PC-9 (cell line): ENCODE measurements at regions of chr7 and their contacts with region 1.

Region 1: DNA sequence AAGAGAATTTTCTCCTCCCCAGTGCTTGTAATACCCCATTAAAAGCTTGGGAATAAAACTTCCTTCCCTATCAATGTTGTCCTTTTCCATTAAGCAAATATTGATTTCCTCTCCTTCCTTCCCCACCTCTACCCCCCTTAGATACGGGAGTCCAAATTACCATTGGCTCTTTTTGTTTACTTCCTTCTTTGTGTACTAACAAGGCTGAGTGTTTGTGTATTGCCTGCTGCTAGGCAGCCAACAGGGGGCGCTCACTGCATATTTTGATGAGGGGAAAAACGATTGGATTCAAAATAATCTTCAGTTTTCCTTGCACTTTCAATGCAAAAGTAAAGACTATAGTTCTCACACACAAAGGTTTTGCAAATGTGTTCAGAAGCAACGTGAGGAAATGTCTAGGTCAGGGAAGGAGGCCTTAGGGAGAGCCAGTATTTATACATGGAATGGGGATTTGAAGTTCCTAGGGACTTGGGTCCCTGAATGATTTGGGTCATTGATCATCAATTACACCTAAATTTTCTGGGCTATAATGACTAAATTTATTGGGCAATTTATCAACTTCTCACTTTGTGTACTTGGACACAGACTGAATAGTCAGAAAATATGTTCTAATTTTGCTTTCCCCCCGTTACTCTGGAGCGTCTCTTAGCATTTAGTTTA is 23.6 kb upstream of the VPS41 start:
- DNase-seq: peak; percentile 52 to 58
- H3K4me3 ChIP-seq: no peak overlapping the region
- H3K27ac ChIP-seq: no peak overlapping the region
- H3K4me1 ChIP-seq: peaks cover 14% of the 10 kb centered on the region
- H3K27me3 ChIP-seq: peaks cover 5% of the 10 kb centered on the region; the same call in 1 of the 2 replicates
- CTCF ChIP-seq: peak; percentile 98

Region 2: DNA sequence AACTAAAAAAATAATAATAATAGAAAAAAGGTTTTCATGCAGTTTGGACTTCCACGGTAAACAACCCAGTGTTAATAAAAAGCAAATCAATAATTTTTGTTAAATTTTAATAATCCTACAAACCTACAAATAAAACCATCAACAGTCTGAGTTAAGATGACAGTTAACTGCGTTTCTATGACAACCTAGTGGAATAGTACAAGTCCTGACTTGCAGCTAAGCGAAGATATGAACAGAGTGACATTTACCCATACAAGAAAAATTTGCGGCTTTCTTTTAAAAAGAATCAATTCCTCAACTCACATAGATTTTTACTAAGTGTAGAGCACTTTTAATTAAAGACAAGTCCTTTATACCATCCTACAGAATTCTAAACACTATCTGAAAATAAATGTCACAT is 59.2 kb before region 1 on chr7:
- CTCF ChIA-PET with region 1: no interaction called
- POLR2A ChIA-PET with region 1: interaction called, 10 read pairs
- intact Hi-C with region 1: no loop called
- DNase-seq: no peak
- H3K4me3 ChIP-seq: no peak overlapping the region
- H3K27ac ChIP-seq: no peak overlapping the region
- H3K4me1 ChIP-seq: no peaks in the 10 kb centered on the region
- H3K27me3 ChIP-seq: no peaks in the 10 kb centered on the region
- CTCF ChIP-seq: no peak

Region 3: DNA sequence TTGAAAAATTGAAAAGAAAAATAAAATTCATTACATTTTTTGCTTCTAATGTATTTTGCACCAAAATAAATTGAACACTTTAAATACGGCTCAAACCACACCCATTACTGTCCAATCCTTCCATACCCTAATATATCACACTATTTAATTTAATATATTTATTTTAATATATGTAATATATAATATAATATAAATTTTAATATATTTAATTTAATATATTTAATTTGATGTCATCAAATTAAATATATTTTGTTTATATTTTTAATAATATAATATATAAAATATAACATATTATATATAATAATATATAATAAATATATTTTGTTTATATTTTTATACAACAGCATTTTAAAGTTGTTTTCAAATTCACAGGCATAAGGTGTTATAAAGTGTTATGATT is 29.4 kb after region 1 on chr7:
- CTCF ChIA-PET with region 1: no interaction called
- POLR2A ChIA-PET with region 1: no interaction called
- intact Hi-C with region 1: no loop called
- DNase-seq: no peak
- H3K4me3 ChIP-seq: no peak overlapping the region
- H3K27ac ChIP-seq: no peak overlapping the region
- H3K4me1 ChIP-seq: no peaks in the 10 kb centered on the region
- H3K27me3 ChIP-seq: peaks cover 35% of the 10 kb centered on the region
- CTCF ChIP-seq: no peak

Region 4: GRCh38 chr7:39465055-39465929 is 532.7 kb after region 1 on chr7:
- CTCF ChIA-PET with region 1: no interaction called
- POLR2A ChIA-PET with region 1: no interaction called
- intact Hi-C with region 1: loop called (anchors 5 kb)
- DNase-seq: peak; percentile 52 to 64
- H3K4me3 ChIP-seq: no peak overlapping the region
- H3K27ac ChIP-seq: no peak overlapping the region
- H3K4me1 ChIP-seq: no peaks in the 10 kb centered on the region
- H3K27me3 ChIP-seq: peaks cover 27% of the 10 kb centered on the region
- CTCF ChIP-seq: peak; percentile 93